Caco-2 (cell line): ENCODE measurements at regions of chr7 and their contacts with region 1.

Region 1: DNA sequence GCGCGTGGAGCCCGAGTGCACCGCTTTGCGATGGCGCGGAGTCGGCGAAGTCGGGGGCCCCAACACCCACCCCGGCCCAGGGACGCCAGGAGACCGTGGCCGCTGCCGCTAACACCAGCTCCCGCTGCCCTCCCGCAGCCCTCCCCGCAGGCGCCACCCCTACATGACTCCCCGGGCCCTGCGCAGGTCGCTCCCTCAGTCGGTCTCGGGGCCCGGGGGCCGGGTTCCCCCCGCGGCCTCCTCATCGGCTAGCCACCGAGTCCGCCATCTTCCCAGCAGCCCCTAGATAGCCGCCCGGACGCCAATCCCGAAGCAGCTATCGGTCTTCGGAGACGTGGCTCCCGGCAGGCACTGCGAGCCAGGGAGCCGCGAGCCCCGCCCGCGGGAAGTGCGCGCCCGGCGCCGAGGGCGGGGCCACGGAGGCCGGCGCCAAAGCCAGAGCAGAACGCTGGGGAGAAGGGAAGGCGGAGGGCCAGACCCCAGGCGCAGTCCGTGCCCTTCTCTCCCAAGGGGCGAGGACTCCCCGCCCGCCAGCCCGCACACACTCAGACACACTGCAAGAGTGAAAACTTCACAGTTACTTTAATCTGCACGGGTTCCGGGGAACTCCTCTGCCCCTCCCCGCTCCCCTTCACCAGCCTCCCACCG is at the start of gene FASTK:
- DNase-seq: peak; percentile 91 to 92
- H3K4me3 ChIP-seq: peak within 1 kb of the TSS; percentile 98
- H3K4me3 Mint-ChIP-seq: peak within 1 kb of the TSS; percentile 93
- H3K27ac Mint-ChIP-seq: peak within 1 kb of the TSS; percentile 87
- H3K4me1 ChIP-seq: peaks cover 26% of the 10 kb centered on the region
- H3K4me1 Mint-ChIP-seq: peaks cover 13% of the 10 kb centered on the region
- H3K27me3 ChIP-seq: no peaks in the 10 kb centered on the region
- H3K27me3 Mint-ChIP-seq: no peaks in the 10 kb centered on the region
- CTCF ChIP-seq: no peak
- total RNA-seq, gene FASTK: 114 and 119 TPM in 2 replicates

Region 2: DNA sequence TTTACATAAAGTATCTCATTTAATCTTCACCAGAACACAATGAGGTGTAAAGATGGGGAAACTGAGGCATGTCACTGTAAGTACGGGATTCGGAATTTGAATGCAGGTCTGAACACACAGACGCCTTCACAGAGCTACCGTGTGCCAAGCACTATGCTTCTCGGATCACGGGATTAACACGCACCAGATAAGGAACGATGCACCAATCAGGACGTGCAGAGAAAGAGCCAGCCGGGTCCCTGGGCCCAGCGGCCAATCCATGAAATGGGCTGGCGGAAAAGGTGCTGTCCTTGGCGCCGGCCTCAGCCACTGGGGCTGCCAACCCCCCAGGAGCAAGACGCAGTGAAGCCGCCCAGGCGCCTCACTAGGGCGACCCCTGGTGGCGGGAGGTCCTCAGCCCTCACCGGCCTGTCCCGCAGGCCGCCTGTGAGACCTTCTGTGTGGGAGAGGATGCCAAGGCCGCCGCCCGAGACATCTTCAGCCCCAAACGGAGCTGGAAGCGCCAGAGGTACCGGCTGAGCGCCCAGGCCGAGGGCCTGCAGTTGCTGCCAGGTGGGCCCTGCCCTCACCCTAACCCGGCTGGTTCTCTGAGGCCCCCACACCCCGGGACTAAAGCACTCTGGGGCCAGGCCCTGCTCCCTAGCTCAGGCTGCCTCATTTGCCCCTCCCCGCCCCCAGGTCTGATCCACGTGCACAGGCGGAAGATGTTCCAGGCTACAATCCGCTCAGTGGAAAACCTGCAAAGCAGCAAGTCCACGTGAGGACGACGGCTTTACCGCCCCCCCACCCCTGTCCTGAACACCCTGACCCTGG is 71.9 kb before region 1 on chr7:
- CTCF ChIA-PET with region 1: no interaction called
- POLR2A ChIA-PET with region 1: no interaction called
- intact Hi-C with region 1: no loop called
- DNase-seq: peak in 1 of 2 experiments; percentile 68
- H3K4me3 ChIP-seq: no peak overlapping the region
- H3K4me3 Mint-ChIP-seq: no peak overlapping the region
- H3K27ac Mint-ChIP-seq: no peak overlapping the region
- H3K4me1 ChIP-seq: peaks cover 23% of the 10 kb centered on the region
- H3K4me1 Mint-ChIP-seq: peaks cover 10% of the 10 kb centered on the region
- H3K27me3 ChIP-seq: no peaks in the 10 kb centered on the region
- H3K27me3 Mint-ChIP-seq: peaks cover 3% of the 10 kb centered on the region
- CTCF ChIP-seq: peak; percentile 43 to 59

Region 3: DNA sequence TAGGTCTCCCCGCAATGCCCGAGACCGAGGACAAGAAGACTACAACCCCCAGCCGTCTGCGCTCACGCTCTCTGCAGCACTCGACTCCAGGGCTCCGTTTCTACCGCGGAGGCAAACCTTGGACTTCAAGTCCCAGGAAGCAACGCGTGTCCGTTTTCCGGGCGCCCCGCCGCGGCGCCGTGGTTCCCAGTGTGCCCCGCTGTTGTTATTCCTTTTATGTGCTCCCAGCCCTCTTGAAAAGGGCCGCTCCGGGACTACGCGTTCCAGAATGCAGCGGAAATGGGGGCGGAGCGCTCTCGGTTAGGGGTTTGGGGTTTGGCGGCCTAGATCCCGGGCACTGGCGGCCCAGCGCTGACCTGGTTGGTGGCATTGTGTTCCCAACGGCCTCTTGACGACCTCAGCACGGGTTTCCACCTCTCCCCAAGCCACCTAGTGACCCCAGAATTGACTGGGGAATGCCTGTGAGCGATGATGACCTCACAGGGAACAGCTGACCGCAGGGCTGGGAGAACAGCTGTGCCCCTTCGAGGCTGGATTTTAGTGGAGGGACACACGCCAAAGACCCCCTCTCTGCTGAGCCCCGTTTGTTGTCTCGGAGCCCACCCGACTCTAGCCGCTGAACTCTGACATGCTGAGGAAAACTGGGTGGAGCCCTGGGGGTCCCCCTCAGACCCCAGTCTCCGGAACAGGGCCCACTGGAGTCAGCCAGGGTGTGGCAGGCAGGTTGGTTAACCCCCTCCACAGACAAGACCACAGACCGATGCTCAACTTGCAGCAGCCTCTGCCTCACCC is 22.5 kb before region 1 on chr7:
- CTCF ChIA-PET with region 1: interaction called, 13 read pairs
- POLR2A ChIA-PET with region 1: interaction called, 25 read pairs
- intact Hi-C with region 1: loop called (anchors 1 kb)
- DNase-seq: peak; percentile 98 to 99
- H3K4me3 ChIP-seq: peak overlapping the region; percentile 59
- H3K4me3 Mint-ChIP-seq: peak overlapping the region; percentile 95
- H3K27ac Mint-ChIP-seq: peak overlapping the region; percentile 94
- H3K4me1 ChIP-seq: peaks cover 23% of the 10 kb centered on the region
- H3K4me1 Mint-ChIP-seq: peaks cover 25% of the 10 kb centered on the region
- H3K27me3 ChIP-seq: no peaks in the 10 kb centered on the region
- H3K27me3 Mint-ChIP-seq: no peaks in the 10 kb centered on the region
- CTCF ChIP-seq: no peak

Region 4: DNA sequence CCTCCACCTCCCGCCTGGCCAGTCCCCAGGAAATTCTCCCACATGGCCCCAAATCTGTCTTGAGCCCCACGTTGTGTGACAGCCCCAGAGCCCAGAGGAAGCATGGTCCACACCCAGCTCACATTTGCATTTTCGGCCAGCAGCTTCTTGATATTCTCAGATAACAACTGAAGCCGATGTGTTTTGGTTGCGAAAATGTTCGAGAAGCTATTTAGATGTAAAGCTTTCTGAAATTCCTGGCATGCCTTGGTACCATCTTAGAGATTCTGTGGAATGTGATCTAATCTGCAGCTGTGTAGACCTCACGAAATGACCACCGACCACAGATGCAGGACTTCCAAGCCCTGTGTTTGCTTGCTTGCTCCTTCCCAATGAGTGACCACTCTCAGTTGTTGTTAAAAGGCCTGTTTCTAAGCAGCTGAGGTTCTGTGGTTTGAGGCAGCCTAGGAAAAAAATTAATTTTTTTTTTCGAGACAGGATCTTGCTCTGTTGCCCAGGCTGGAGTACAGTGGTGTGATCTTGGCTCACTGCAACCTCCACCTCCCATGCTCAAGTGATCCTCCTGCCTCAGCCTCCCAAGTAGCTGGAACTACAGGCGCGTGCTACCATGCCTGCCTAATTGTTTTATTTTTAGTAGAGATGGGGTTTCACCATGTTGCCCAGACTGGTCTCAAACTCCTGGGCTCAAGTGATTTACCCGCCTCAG is 12.4 kb before region 1 on chr7:
- CTCF ChIA-PET with region 1: interaction called, 13 read pairs
- POLR2A ChIA-PET with region 1: interaction called, 25 read pairs
- intact Hi-C with region 1: no loop called
- DNase-seq: no peak
- H3K4me3 ChIP-seq: no peak overlapping the region
- H3K4me3 Mint-ChIP-seq: peak overlapping the region; percentile 39
- H3K27ac Mint-ChIP-seq: peak overlapping the region; percentile 80
- H3K4me1 ChIP-seq: peaks cover 25% of the 10 kb centered on the region
- H3K4me1 Mint-ChIP-seq: no peaks in the 10 kb centered on the region
- H3K27me3 ChIP-seq: no peaks in the 10 kb centered on the region
- H3K27me3 Mint-ChIP-seq: no peaks in the 10 kb centered on the region
- CTCF ChIP-seq: no peak

Region 5: DNA sequence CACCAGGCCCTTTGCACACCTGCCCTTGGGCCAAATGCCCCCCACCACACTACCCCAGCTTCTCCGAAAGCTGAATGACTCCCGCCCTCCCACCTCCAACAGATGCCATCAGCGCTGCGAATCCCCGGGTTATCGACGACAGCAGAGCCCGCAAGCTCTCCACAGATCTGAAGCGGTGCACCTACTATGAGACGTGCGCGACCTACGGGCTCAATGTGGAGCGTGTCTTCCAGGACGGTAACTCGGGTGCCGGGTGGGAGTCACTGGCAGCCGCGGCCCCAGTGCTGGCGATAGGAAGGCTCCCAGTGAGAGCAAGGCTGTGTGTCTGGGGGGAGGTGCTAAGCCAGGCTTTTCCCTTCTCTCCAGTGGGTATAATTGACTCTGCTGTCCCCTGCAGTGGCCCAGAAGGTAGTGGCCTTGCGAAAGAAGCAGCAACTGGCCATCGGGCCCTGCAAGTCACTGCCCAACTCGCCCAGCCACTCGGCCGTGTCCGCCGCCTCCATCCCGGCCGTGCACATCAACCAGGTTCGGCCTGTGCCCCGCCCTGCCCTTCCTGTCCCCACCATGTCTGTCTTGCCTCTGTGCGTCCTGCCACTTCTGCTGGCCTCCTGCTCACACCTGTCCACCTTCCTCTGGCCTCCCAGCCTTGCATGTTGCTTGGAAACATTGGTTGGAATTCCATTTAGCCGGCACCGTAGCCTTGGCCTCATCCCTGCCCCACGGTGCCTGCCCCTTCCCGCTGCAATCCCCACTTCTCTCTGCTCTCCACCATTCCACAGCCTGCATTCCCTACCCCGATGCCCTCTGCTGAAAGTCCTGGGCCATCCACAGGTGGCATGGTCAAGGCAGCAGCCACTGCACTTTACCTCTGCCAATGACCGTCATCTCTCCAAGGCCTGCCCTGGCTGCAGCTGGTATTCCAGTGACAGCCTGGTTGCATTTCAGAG is 37.7 kb after region 1 on chr7:
- CTCF ChIA-PET with region 1: no interaction called
- POLR2A ChIA-PET with region 1: no interaction called
- intact Hi-C with region 1: no loop called
- DNase-seq: no peak
- H3K4me3 ChIP-seq: no peak overlapping the region
- H3K4me3 Mint-ChIP-seq: no peak overlapping the region
- H3K27ac Mint-ChIP-seq: no peak overlapping the region
- H3K4me1 ChIP-seq: peaks cover 20% of the 10 kb centered on the region
- H3K4me1 Mint-ChIP-seq: peaks cover 3% of the 10 kb centered on the region
- H3K27me3 ChIP-seq: no peaks in the 10 kb centered on the region
- H3K27me3 Mint-ChIP-seq: no peaks in the 10 kb centered on the region
- CTCF ChIP-seq: no peak